Endothelial cell of umbilical vein (primary cell): ENCODE measurements at regions of chr1 and their contacts with region 1.

Region 1: DNA sequence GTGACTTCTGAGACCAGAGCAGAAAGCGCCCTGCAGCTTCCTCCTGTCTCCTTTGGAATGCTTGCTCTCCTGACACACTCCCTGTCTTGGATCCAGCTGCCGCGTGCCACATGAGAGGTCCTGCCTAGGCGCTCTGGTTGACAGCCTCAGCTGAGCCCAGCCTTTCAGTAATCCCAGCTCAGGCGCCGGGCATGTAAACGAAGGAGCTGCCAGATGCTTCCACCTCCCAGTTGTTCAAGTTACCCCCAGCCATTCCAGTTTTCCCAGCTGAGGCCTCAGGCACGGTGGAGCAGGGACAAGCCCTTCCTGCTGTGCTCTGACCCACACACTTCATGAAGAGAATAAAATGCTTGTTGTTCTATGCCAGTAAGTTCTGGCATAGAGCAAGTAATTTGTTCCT is 14.3 kb upstream of the CD34 start:
- DNase-seq: peak; percentile 88
- H3K4me3 ChIP-seq: no peak overlapping the region
- H3K27ac ChIP-seq: no peak overlapping the region
- H3K4me1 ChIP-seq: peaks cover 33% of the 10 kb centered on the region
- H3K27me3 ChIP-seq: no peaks in the 10 kb centered on the region
- CTCF ChIP-seq: no peak
- POLR2A ChIP-seq: no peak

Region 2: DNA sequence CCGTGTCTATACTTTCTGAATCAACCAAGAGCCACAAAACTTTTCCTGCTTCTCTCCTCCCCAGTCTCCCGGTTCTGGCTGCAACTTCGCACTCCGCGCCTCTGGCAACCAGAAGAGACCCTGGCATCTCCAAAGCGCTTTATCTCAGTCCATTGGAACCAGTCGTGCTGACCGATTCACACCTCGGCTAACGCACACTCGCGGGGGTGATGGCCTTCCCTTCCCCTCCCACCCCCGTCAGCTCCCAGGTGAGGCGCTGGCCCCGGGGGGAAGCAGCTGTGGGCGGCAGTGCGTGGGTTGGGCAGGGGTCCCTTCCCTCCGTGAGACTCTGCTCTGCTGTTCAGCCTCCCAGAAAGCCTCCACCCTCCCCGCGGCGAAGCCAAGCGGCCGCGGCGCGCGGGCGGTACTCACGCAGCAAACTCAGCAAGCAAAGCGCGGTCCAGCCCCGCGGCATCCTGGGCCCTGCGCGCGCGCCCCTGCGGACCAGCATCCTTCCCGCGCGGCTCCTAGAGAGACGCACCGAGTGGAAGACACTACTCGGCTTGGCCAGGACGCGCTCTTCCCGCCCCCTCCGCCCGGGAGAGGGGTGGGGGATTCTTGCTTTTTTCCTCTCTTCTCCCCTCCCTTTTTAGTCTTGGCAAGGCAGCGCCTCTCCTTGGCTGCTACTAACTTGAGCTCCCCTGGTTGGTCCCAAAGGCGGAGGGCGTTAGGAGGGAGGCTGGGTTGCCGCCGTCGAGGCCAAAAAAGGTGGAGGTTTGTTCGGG is 14.4 kb before region 1 on chr1 and contains the start of gene CD34:
- CTCF ChIA-PET with region 1: interaction called, 8 read pairs
- POLR2A ChIA-PET with region 1: interaction called, 3 read pairs
- dilution Hi-C with region 1: no loop called
- intact Hi-C with region 1: loop called (anchors 1 kb)
- DNase-seq: peak; percentile 46
- H3K4me3 ChIP-seq: peak within 1 kb of the TSS; percentile 12 to 44 (median 21)
- H3K27ac ChIP-seq: no peak within 1 kb of the TSS
- H3K4me1 ChIP-seq: peaks cover 14% of the 10 kb centered on the region
- H3K27me3 ChIP-seq: peaks cover 9 to 16% of the 10 kb centered on the region in 2 experiments
- CTCF ChIP-seq: no peak
- POLR2A ChIP-seq: no peak
- total RNA-seq, gene CD34: 115 and 174 TPM in 2 replicates